HepG2 (cell line): ENCODE measurements at regions of chrX and their contacts with region 1.

Region 1: GRCh38 chrX:76893930-76894329 is 466.4 kb downstream of the MAGEE1 start:
- DNase-seq: no peak
- ATAC-seq: no peak
- H3K4me3 ChIP-seq: no peak overlapping the region
- H3K27ac ChIP-seq: no peak overlapping the region
- H3K4me1 ChIP-seq: no peaks in the 10 kb centered on the region
- H3K27me3 ChIP-seq: no peaks in the 10 kb centered on the region
- CTCF ChIP-seq: no peak
- EP300 ChIP-seq: no peak
- POLR2A ChIP-seq: no peak
- RAD21 ChIP-seq: no peak

Region 2: DNA sequence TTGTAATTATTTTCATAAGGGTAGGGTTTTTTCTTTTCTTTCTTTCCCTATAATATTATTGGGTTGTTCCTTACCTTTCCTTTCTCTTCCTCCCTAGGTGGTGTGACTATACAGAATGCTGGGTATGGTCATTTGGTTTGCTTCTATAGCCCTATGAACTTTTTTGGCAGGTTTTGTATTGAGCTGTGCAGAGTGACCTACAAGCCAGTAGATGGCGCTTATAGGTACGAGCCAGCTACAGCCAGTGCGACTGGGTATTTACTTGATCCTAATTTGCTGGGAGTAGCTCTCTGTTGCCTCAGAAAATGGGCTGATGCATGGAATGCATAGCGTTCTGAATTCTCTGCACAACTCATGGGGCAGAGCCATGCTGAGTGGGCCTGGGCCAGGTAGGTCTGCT is 43.1 kb before region 1 on chrX:
- CTCF ChIA-PET with region 1: no interaction called
- POLR2A ChIA-PET with region 1: no interaction called
- in situ Hi-C with region 1: no loop called
- intact Hi-C with region 1: no loop called
- DNase-seq: no peak
- ATAC-seq: no peak
- H3K4me3 ChIP-seq: no peak overlapping the region
- H3K27ac ChIP-seq: no peak overlapping the region
- H3K4me1 ChIP-seq: no peaks in the 10 kb centered on the region
- H3K27me3 ChIP-seq: no peaks in the 10 kb centered on the region
- CTCF ChIP-seq: no peak
- EP300 ChIP-seq: no peak
- POLR2A ChIP-seq: no peak
- RAD21 ChIP-seq: no peak

Region 3: GRCh38 chrX:77065896-77066295 is 172.0 kb after region 1 on chrX:
- CTCF ChIA-PET with region 1: no interaction called
- POLR2A ChIA-PET with region 1: no interaction called
- in situ Hi-C with region 1: no loop called
- intact Hi-C with region 1: loop called (anchors 5 kb)
- DNase-seq: no peak
- ATAC-seq: no peak
- H3K4me3 ChIP-seq: no peak overlapping the region
- H3K27ac ChIP-seq: no peak overlapping the region
- H3K4me1 ChIP-seq: no peaks in the 10 kb centered on the region
- H3K27me3 ChIP-seq: no peaks in the 10 kb centered on the region
- CTCF ChIP-seq: no peak
- EP300 ChIP-seq: no peak
- POLR2A ChIP-seq: no peak
- RAD21 ChIP-seq: no peak